GM12878 (cell line): ENCODE measurements at regions of chr1 and their contacts with region 1.

Region 1: DNA sequence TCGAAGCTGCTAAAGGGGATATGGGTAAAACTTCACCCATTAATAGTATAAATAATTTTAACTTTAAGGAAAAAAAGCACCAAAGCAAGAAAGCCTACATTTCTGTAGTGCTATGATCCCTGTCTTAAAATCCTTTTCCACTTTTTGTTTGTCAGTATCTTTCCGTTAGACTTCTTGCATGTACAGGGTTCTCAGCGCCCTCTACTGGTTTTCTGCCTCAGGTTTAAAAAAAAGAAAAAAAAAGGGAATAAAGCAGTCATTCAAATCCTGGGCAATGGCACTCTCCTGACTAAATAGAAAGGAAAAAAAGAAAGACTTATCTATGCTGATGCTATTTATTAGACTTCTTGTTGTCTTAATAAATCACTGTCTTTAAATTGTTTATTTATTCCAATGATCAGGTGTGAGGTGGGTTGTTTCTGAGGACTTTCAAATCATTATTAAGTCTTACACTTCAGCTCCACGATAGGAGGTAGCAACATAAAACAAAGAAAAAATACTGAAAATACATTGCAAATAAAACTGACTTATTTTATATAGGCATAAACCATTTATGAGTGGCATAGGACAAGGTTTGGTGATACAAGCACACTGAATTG is 475.4 kb upstream of the NR5A2 start:
- DNase-seq: no peak
- ATAC-seq: peak; percentile 63
- H3K4me3 ChIP-seq: no peak overlapping the region
- H3K27ac ChIP-seq: no peak overlapping the region
- H3K4me1 ChIP-seq: no peaks in the 10 kb centered on the region
- H3K27me3 ChIP-seq: no peaks in the 10 kb centered on the region
- CTCF ChIP-seq: peak; percentile 64 to 68 (median 67)
- EP300 ChIP-seq: no peak
- POLR2A ChIP-seq: no peak
- RAD21 ChIP-seq: peak; percentile 94

Region 2: DNA sequence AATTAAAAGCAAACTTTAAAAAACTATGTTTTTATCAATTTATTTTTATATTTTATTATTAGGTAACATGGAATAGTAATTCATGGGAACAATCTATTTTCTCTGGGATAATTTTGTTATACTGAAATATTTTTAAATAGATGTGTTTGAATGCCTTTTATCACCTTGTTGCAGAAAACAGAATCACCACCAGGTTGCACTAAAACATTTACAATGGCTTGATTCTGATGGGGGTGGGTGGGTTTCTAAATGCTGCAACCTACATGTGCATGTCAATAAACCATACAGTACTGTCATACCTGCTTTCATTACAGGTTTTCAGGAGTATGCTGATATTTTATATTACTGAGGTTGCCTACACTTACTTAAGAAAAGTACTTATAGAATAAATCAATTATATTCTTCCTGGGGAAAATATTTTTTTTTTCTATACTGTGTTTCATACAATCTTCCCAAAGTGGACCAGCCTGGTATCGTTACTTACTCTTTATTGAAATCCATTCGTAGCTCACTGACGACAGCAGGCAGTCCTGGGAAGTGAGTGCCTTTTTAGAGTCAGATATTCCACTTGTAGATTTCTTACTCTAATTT is 780.4 kb before region 1 on chr1:
- CTCF ChIA-PET with region 1: interaction called, 7 read pairs
- POLR2A ChIA-PET with region 1: no interaction called
- RAD21 ChIA-PET with region 1: no interaction called
- SMC1A ChIA-PET with region 1: interaction called, 4 read pairs
- in situ Hi-C with region 1: loop called (anchors 10 kb)
- intact Hi-C with region 1: loop called (anchors 5 kb)
- DNase-seq: peak; percentile 20
- ATAC-seq: peak; percentile 70
- H3K4me3 ChIP-seq: no peak overlapping the region
- H3K27ac ChIP-seq: no peak overlapping the region
- H3K4me1 ChIP-seq: no peaks in the 10 kb centered on the region
- H3K27me3 ChIP-seq: no peaks in the 10 kb centered on the region
- CTCF ChIP-seq: peak; percentile 35 to 61 (median 41); a peak in 5 of 6 replicates
- EP300 ChIP-seq: no peak
- POLR2A ChIP-seq: no peak
- RAD21 ChIP-seq: peak; percentile 98

Region 3: DNA sequence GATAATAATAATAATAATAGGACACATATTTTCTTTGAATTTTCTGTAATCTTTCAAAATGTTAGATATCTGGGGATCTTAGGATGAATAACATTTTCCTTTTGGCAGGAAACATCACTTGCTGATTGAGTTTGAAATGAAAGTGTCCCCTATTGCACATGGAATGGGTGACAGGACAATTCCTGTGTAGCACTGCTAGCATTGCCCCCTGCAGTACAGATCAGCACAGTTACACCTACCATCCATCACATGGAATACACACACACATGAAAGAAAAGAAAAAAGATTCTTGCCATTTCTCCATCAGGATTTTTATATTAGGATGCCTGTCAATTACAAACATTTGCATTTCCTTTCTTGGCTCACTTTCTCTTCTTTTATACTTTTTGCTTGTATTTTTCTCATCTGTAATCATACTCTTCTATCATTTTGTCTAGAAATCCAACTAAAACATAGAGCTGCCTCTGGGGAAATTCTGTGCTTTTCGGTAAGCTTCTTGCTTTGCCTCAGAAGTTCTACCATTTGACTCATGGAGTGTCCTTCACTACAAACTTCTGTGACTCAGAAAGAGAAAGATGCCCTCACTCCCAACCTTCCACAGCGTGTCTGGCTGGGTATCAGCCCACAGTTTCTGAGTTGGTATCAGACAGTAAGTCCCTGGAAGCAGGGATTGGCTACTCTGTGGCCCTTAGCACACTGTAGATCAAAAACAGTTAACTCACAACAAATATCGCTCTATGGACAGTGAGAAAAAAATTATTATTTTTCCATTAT is 272.0 kb before region 1 on chr1:
- CTCF ChIA-PET with region 1: no interaction called
- POLR2A ChIA-PET with region 1: no interaction called
- RAD21 ChIA-PET with region 1: no interaction called
- SMC1A ChIA-PET with region 1: interaction called, 5 read pairs
- in situ Hi-C with region 1: no loop called
- intact Hi-C with region 1: loop called (anchors 10 kb)
- DNase-seq: no peak
- ATAC-seq: peak; percentile 86
- H3K4me3 ChIP-seq: no peak overlapping the region
- H3K27ac ChIP-seq: no peak overlapping the region
- H3K4me1 ChIP-seq: no peaks in the 10 kb centered on the region
- H3K27me3 ChIP-seq: no peaks in the 10 kb centered on the region
- CTCF ChIP-seq: 0 out of 6 replicates have a peak, but pooled peaks of 2 of the 3 experiments have one; percentile 1 to 14
- EP300 ChIP-seq: 0 out of 4 replicates have a peak, but pooled peaks of 1 of the 2 experiments have one; percentile 39
- POLR2A ChIP-seq: no peak
- RAD21 ChIP-seq: 0 out of 2 replicates have a peak, but pooled peaks have one; percentile 3

Region 4: DNA sequence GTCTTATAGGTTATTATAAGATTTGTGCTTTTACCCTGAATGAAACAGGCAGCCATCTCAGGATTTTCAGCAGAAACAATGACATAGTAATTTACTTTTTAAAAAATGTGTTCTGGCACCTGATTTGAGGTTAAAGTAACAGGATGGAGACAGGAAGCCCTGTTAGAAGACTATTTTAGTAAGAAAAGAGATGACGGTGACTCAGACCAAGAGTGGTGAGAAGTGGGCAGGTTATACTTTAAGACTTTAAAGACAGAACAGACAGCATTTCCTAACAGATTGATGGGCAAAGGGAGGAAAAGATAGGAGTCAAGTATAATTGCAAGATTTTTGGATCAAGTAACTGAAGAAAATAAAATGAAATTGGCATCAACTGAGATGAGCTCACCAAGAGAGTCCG is 38.6 kb after region 1 on chr1:
- CTCF ChIA-PET with region 1: no interaction called
- POLR2A ChIA-PET with region 1: no interaction called
- RAD21 ChIA-PET with region 1: no interaction called
- SMC1A ChIA-PET with region 1: no interaction called
- in situ Hi-C with region 1: no loop called
- intact Hi-C with region 1: no loop called
- DNase-seq: no peak
- ATAC-seq: peak; percentile 54
- H3K4me3 ChIP-seq: no peak overlapping the region
- H3K27ac ChIP-seq: no peak overlapping the region
- H3K4me1 ChIP-seq: no peaks in the 10 kb centered on the region
- H3K27me3 ChIP-seq: no peaks in the 10 kb centered on the region
- CTCF ChIP-seq: no peak
- EP300 ChIP-seq: no peak
- POLR2A ChIP-seq: no peak
- RAD21 ChIP-seq: no peak